Activated T-helper 1 cell treated with anti-CD3 and anti-CD28 coated beads, Interleukin-12 subunit alpha, Interleukin-12 subunit beta, Interleukin-2, Interleukin-4 antibody, amounts not matched to agents 30 ng/mL and 10 ng/mL and 1 ng/mL, durations not matched to agents 14 hours and 24 hours and 36 hours (primary cell): ENCODE measurements at regions of chr12 and their contacts with region 1.

Region 1: DNA sequence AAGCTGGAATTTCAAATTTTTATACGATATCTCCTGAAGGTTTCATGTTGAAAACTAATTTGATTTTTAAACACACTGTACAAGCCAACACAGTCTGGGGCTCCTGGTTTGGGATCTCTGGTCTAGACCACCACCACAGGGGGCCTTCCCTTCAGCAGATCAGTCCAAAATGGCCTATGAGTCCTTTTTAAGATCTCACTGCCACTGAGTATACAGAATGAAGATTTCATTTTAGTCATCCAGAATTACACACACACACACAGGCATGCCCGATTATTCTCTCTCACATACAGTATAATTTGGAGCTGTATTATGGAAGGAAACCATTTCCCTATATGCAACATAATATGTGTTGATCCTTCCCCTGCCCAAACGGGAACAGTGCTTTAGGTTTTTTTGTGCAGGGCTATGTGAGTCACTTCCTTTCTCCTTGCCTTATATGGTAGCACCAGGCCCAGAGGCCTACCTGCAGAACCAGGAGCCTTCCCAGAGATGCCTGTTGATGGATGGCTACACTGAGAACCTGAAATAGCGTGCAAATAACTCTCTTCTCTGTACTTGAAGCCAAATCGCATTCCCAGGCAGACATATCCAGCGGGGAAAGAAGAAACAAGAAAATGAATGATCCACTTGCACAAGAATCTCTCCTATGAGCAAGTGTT is 28.1 kb upstream of the WNK1 start:
- DNase-seq: no peak
- H3K4me3 Mint-ChIP-seq: no peak overlapping the region
- H3K27ac Mint-ChIP-seq: peak overlapping the region; percentile 30
- H3K4me1 Mint-ChIP-seq: peaks cover 75% of the 10 kb centered on the region
- H3K27me3 Mint-ChIP-seq: no peaks in the 10 kb centered on the region

Region 2: GRCh38 chr12:737122-737739 is 12.9 kb after region 1 on chr12:
- intact Hi-C with region 1: loop called (anchors 2 kb)
- DNase-seq: no peak
- H3K4me3 Mint-ChIP-seq: no peak overlapping the region
- H3K27ac Mint-ChIP-seq: no peak overlapping the region
- H3K4me1 Mint-ChIP-seq: peaks cover 8% of the 10 kb centered on the region
- H3K27me3 Mint-ChIP-seq: no peaks in the 10 kb centered on the region

Region 3: GRCh38 chr12:823028-823698 is 98.8 kb after region 1 on chr12:
- intact Hi-C with region 1: no loop called
- DNase-seq: no peak
- H3K4me3 Mint-ChIP-seq: no peak overlapping the region
- H3K27ac Mint-ChIP-seq: peak overlapping the region; percentile 70
- H3K4me1 Mint-ChIP-seq: peaks cover 58% of the 10 kb centered on the region
- H3K27me3 Mint-ChIP-seq: no peaks in the 10 kb centered on the region